ENCODE measurements at regions of chr6 and their contacts with region 1.

Region 1: GRCh38 chr6:3356056-3356761 is 97.5 kb downstream of the PSMG4 start:
- DNase-seq: peak in 8 of 9 donors; percentile 31 to 86 (median 78)
- ATAC-seq: peak; percentile 89
- H3K4me3 ChIP-seq: peak overlapping the region; percentile 65
- H3K4me3 Mint-ChIP-seq: peak overlapping the region; percentile 76 to 99 (median 88)
- H3K27ac ChIP-seq: peak overlapping the region; percentile 78
- H3K27ac Mint-ChIP-seq: peak overlapping the region in 8 of 9 donors; percentile 92 to 100 (median 98)
- H3K4me1 ChIP-seq: peaks cover 7 to 27% of the 10 kb centered on the region in 2 donors
- H3K4me1 Mint-ChIP-seq: peaks cover 14 to 79% (median 58%) of the 10 kb centered on the region in 7 donors
- H3K27me3 ChIP-seq: no peaks in the 10 kb centered on the region
- H3K27me3 Mint-ChIP-seq: peaks cover 0 to 43% (median 0%) of the 10 kb centered on the region in 5 donors

Region 2: GRCh38 chr6:2245094-2245876 is 1110.9 kb before region 1 on chr6 and contains the start of gene GMDS:
- CTCF ChIA-PET with region 1: no interaction called
- POLR2A ChIA-PET with region 1: no interaction called
- intact Hi-C with region 1: loop called in 1 of 2 experiments (anchors 2 kb)
- DNase-seq: peak; percentile 67 to 86 (median 79)
- ATAC-seq: peak; percentile 98
- H3K4me3 ChIP-seq: peak within 1 kb of the TSS; percentile 90
- H3K4me3 Mint-ChIP-seq: peak within 1 kb of the TSS; percentile 86 to 97 (median 93)
- H3K27ac ChIP-seq: peak within 1 kb of the TSS; percentile 96
- H3K27ac Mint-ChIP-seq: peak within 1 kb of the TSS; percentile 84 to 98 (median 95)
- H3K4me1 ChIP-seq: peaks cover 15 to 18% of the 10 kb centered on the region in 2 donors
- H3K4me1 Mint-ChIP-seq: peaks cover 41 to 77% (median 61%) of the 10 kb centered on the region in 7 donors
- H3K27me3 ChIP-seq: no peaks in the 10 kb centered on the region
- H3K27me3 Mint-ChIP-seq: no peaks in the 10 kb centered on the region
- total RNA-seq, gene GMDS: 12.7 to 33.9 (median 18.3) TPM

Region 3: GRCh38 chr6:3125815-3126214 is 230.4 kb before region 1 on chr6:
- CTCF ChIA-PET with region 1: no interaction called
- POLR2A ChIA-PET with region 1: no interaction called
- intact Hi-C with region 1: loop called in 1 of 2 experiments (anchors 1 kb)
- DNase-seq: no peak
- ATAC-seq: no peak
- H3K4me3 ChIP-seq: no peak overlapping the region
- H3K4me3 Mint-ChIP-seq: no peak overlapping the region
- H3K27ac ChIP-seq: no peak overlapping the region
- H3K27ac Mint-ChIP-seq: no peak overlapping the region
- H3K4me1 ChIP-seq: no peaks in the 10 kb centered on the region
- H3K4me1 Mint-ChIP-seq: peaks cover 0 to 3% (median 0%) of the 10 kb centered on the region in 7 donors
- H3K27me3 ChIP-seq: no peaks in the 10 kb centered on the region
- H3K27me3 Mint-ChIP-seq: no peaks in the 10 kb centered on the region

Region 4: GRCh38 chr6:3258720-3259490 is 97.3 kb before region 1 on chr6 and contains the start of gene PSMG4:
- CTCF ChIA-PET with region 1: no interaction called
- POLR2A ChIA-PET with region 1: no interaction called
- intact Hi-C with region 1: loop called in 1 of 2 experiments (anchors 1 kb)
- DNase-seq: peak; percentile 81 to 98 (median 89)
- ATAC-seq: peak; percentile 97
- H3K4me3 ChIP-seq: peak within 1 kb of the TSS; percentile 85
- H3K4me3 Mint-ChIP-seq: peak within 1 kb of the TSS; percentile 85 to 99 (median 97)
- H3K27ac ChIP-seq: peak within 1 kb of the TSS; percentile 80
- H3K27ac Mint-ChIP-seq: peak within 1 kb of the TSS; percentile 84 to 98 (median 92)
- H3K4me1 ChIP-seq: peaks cover 19 to 26% of the 10 kb centered on the region in 2 donors
- H3K4me1 Mint-ChIP-seq: peaks cover 28 to 45% (median 42%) of the 10 kb centered on the region in 7 donors
- H3K27me3 ChIP-seq: no peaks in the 10 kb centered on the region
- H3K27me3 Mint-ChIP-seq: peaks cover 0 to 25% (median 0%) of the 10 kb centered on the region in 5 donors
- total RNA-seq, gene PSMG4: 15.6 to 45.0 (median 27.7) TPM

Region 5: DNA sequence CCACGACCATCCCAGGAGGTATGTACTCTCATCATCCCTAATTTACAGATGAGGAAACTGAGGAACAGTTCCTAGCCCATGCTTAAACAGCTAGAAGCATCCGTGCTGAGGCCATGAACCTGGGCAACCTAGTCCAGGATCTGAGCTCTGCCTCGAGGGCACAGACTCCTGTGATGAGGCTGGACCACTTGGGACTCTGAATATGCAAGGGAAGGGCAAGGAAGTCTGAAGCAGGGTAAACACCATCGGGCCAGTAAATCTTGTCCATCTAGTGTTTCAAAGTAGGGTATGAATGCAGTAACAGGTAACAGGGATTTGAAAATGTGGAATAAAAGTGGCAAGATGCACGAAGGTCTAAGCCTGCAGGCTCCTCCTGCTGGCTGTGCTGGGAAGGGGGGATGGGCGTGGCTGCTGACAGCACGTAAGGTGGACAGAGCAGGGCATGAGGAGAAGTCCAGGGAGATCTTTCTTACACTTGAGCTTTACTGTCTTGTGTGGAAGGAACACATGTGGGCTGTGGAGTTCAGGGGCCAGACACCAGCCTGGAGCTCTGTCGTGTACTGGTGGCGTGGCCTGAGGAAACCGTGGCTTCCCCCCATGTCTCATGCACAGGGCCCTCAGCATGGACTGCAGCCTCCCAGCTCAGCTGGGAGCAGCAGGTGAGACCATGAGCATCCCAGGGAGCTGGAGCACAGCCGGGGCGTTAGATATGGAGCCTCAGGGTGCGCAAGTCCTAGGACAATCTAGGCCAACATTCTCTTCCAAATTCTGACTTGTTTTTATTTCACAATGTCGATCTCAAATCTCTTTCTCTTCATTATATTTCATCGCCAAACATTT is 16.0 kb after region 1 on chr6:
- CTCF ChIA-PET with region 1: no interaction called
- POLR2A ChIA-PET with region 1: interaction called, 5 read pairs
- intact Hi-C with region 1: loop called in 1 of 2 experiments (anchors 1 kb)
- DNase-seq: no peak
- ATAC-seq: no peak
- H3K4me3 ChIP-seq: no peak overlapping the region
- H3K4me3 Mint-ChIP-seq: peak overlapping the region in 1 of 10 donors; percentile 24
- H3K27ac ChIP-seq: no peak overlapping the region
- H3K27ac Mint-ChIP-seq: peak overlapping the region in 7 of 9 donors; percentile 48 to 98 (median 89)
- H3K4me1 ChIP-seq: peaks cover 6 to 22% of the 10 kb centered on the region in 2 donors
- H3K4me1 Mint-ChIP-seq: peaks cover 5 to 66% (median 52%) of the 10 kb centered on the region in 7 donors
- H3K27me3 ChIP-seq: no peaks in the 10 kb centered on the region
- H3K27me3 Mint-ChIP-seq: peaks cover 0 to 2% (median 0%) of the 10 kb centered on the region in 5 donors

Region 6: DNA sequence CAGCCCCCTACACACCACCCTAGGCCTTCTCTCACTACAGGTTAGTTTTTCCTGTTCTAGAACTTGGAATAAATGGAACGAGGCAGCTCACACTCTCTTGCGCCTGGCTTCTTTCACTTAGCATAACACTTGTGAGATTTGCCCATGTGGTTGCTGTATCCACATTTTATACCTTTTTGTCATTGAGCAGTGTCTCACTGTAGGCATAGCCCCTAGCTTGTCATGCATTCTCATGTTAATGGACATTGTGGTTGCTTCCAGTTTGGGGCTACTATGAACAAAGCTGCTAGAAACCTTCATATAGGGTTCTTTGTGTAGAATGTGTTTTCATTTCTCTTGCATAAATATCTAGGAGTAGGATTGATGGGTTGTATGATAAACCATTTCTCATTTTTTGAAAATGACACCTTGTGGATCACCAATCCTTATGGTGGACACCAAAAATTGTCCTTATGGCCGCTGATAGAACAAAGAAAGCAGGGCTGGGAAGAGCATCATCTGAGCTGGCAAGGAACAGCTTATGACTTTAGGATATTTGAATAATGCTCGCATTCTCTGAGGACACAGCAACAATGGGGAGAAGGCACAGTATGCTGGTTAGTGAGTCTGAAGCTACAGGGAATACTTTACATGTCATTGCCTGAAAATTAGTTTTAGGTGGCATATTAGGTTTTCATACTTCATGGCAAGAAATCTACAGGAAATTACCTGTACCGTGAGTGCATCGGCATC is 110.4 kb after region 1 on chr6:
- CTCF ChIA-PET with region 1: no interaction called
- POLR2A ChIA-PET with region 1: no interaction called
- intact Hi-C with region 1: no loop called
- DNase-seq: no peak
- ATAC-seq: no peak
- H3K4me3 ChIP-seq: no peak overlapping the region
- H3K4me3 Mint-ChIP-seq: no peak overlapping the region
- H3K27ac ChIP-seq: no peak overlapping the region
- H3K27ac Mint-ChIP-seq: no peak overlapping the region
- H3K4me1 ChIP-seq: no peaks in the 10 kb centered on the region
- H3K4me1 Mint-ChIP-seq: no peaks in the 10 kb centered on the region
- H3K27me3 ChIP-seq: no peaks in the 10 kb centered on the region
- H3K27me3 Mint-ChIP-seq: peaks cover 0 to 14% (median 3%) of the 10 kb centered on the region in 5 donors

Region 7: DNA sequence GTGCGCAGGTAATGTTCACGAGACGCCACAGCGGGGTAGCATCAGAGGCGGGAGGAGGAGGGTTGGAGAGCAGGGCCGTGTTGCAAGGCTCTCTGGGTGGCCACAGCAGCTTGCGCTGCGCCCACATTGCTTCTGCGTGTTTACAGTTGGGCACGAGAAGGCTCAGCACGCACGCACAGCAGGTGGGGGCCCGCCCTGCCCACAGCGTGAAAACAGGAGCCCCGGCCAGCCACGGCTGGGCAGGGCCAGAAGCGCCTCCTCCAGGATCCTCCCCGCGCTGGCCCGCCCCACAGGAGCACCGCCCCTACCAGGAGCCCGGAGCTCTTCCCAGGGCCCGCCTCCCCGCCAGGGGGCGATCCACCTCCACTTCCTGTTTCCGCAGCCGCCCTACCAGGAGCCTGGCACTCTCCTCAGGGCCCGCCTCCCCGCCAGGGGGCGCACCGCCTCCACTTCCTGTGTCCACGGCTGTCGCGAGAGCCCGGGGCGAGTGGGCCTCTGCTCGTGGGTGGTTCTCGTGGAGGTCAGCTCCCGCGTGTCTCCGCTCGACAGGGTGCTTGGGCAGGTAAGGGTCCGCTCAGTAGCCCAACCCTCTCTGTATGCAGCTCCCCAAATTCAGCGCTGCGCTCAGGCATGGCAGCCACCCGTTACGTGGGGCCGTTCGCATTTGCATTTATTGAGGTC is 492.9 kb after region 1 on chr6 and contains the start of gene FAM50B:
- CTCF ChIA-PET with region 1: no interaction called
- POLR2A ChIA-PET with region 1: no interaction called
- intact Hi-C with region 1: loop called in 1 of 2 experiments (anchors 1 kb)
- DNase-seq: peak; percentile 84 to 92 (median 90)
- ATAC-seq: peak; percentile 99
- H3K4me3 ChIP-seq: peak within 1 kb of the TSS; percentile 72
- H3K4me3 Mint-ChIP-seq: peak within 1 kb of the TSS; percentile 68 to 89 (median 80)
- H3K27ac ChIP-seq: peak within 1 kb of the TSS; percentile 59
- H3K27ac Mint-ChIP-seq: peak within 1 kb of the TSS; percentile 27 to 95 (median 78)
- H3K4me1 ChIP-seq: peaks cover 0 to 6% of the 10 kb centered on the region in 2 donors
- H3K4me1 Mint-ChIP-seq: peaks cover 0 to 26% (median 16%) of the 10 kb centered on the region in 7 donors
- H3K27me3 ChIP-seq: no peaks in the 10 kb centered on the region
- H3K27me3 Mint-ChIP-seq: peaks cover 0 to 3% (median 0%) of the 10 kb centered on the region in 5 donors
- total RNA-seq, gene FAM50B: 3.4 to 14.1 (median 12.0) TPM

Measured in naive thymus-derived CD4-positive, alpha-beta T cell (primary cell).